PC-9 (cell line): ENCODE measurements at regions of chr16 and their contacts with region 1.

Region 1: GRCh38 chr16:51538707-51539498 is 387.8 kb upstream of the SALL1 start:
- DNase-seq: no peak
- H3K4me3 ChIP-seq: no peak overlapping the region
- H3K27ac ChIP-seq: no peak overlapping the region
- H3K4me1 ChIP-seq: no peaks in the 10 kb centered on the region
- H3K27me3 ChIP-seq: 0 out of 2 replicates have a peak, but pooled peaks cover 4% of the 10 kb centered on the region
- CTCF ChIP-seq: no peak

Region 2: DNA sequence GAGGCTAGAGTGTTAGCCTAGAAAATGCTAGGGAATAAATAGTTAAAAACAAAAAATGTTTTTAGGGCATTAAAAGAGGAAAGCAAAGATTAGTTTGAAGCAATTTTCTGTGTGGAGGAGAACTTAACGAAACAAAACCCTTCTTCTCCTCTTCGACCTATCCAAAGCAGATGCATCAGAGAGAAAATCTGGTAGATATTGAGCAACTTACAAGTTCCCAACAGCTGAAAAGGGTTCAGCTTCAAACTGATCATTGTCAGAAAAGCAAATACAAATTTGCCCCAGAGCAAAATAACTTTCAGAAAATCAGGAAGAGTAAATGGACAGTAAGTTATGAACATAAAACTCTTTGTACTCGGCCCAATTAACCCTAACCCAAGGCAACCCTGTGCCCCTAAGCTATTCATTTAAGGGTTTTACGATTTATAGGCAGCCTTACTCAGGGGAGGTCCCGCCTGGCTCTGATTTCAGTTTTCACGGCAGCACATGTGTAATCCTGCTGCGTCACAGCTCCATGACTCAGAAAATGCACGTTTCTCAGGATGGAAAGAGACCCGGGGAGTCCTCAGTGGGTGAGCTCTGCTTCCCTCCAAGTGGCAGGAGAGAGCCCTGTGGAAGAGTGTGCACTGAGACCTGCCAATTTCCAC is 17.9 kb after region 1 on chr16:
- CTCF ChIA-PET with region 1: no interaction called
- POLR2A ChIA-PET with region 1: no interaction called
- intact Hi-C with region 1: loop called (anchors 1 kb)
- DNase-seq: no peak
- H3K4me3 ChIP-seq: no peak overlapping the region
- H3K27ac ChIP-seq: no peak overlapping the region
- H3K4me1 ChIP-seq: no peaks in the 10 kb centered on the region
- H3K27me3 ChIP-seq: peaks cover 14% of the 10 kb centered on the region; the same call in 1 of the 2 replicates
- CTCF ChIP-seq: no peak